ENCODE measurements at regions of chr16 and their contacts with region 1.

Region 1: DNA sequence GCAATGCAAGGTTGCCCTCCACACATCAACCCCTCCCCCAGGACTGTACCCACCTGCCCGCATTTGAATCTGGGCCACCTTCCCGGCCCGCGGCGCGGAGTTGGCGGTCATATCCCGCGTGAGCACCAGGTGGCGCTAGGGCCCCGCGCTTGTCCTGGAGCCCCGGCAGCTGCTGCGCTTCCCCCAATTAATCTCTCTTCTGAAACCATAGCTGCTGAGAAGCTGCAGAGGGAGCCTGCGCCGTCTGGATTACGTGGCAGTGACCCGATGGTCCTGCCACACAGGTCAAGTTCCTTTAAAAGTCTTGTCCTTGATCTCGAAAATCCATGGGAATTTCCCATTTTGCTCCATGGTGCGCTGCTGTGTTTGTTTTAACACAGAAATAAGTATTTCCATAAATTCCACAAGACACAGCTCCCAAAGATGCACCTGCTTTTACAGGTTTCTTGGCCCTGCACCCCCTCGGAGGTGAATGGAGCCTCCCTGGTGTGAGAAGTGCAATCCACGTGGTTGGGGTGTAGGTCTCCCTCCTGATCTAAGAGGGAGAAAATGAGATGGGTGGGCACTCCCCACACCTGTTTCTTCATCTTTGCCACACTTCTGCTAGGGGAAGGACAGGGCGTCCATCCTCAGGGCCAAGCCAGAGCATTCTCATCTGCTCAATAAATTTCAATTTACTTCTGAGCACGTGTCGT is 22.1 kb downstream of the COX4I1 start:
- DNase-seq: peak; percentile 89
- ATAC-seq: peak; percentile 80
- H3K4me3 Mint-ChIP-seq: no peak overlapping the region
- H3K27ac Mint-ChIP-seq: no peak overlapping the region
- H3K4me1 Mint-ChIP-seq: peaks cover 4% of the 10 kb centered on the region; the same call in 1 of the 2 replicates
- H3K27me3 Mint-ChIP-seq: peaks cover 29% of the 10 kb centered on the region
- CTCF ChIP-seq: peak; percentile 98

Region 2: DNA sequence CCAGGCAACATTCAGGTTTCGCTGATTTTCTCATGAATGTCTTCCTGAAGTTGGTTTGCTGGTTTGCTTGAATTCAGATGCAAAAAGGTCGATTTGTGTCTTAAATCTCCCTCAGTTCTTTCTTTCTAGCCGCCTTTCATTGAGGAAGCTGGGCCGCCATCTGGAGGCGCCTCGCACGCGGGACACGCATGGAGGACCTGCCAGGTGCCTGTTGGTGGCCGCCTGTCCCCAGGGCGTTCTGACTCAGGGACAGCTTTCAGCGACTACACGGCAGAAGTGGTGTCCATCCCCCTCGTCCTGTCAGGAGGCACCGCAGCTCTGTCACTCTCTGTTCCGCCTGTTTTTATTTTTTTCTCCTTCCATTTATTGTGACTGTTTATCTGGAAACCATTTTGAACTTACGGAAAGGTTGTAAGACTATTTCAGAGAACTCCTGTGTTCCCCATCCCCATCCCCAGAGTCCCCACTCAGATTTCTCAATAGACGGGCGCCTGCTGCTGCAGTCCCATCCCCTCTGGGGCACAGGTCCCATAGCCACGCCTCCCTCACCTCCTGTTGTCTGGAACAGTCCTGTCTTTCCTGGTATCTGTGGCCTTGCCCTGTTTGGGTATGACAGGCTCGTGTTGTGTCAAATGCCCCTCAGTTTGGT is 11.1 kb after region 1 on chr16:
- CTCF ChIA-PET with region 1: interaction called, 67 read pairs
- POLR2A ChIA-PET with region 1: no interaction called
- DNase-seq: no peak
- ATAC-seq: no peak
- H3K4me3 Mint-ChIP-seq: no peak overlapping the region
- H3K27ac Mint-ChIP-seq: no peak overlapping the region
- H3K4me1 Mint-ChIP-seq: no peaks in the 10 kb centered on the region
- H3K27me3 Mint-ChIP-seq: peaks cover 17% of the 10 kb centered on the region
- CTCF ChIP-seq: no peak

Region 3: DNA sequence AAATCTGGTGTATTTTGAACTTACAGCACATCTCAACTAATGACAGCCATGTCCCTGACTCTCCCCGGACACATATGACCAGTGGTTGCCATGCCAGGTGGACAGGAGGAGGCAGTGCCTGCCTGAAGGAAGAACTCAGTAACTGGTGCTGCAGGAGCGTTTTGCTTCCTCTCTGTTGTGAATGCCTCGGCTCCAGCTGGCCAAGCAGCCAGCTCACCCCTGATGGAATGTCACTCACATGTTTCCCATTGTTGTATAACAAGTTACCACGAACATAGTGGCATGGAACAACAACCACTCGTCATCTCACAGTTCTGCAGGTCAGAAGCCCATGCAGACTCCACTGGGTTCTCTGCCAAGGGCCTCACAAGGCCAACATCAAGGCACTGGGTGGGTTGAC is 57.3 kb after region 1 on chr16:
- CTCF ChIA-PET with region 1: interaction called, 13 read pairs
- POLR2A ChIA-PET with region 1: no interaction called
- DNase-seq: no peak
- ATAC-seq: no peak
- H3K4me3 Mint-ChIP-seq: no peak overlapping the region
- H3K27ac Mint-ChIP-seq: no peak overlapping the region
- H3K4me1 Mint-ChIP-seq: no peaks in the 10 kb centered on the region
- H3K27me3 Mint-ChIP-seq: peaks cover 21% of the 10 kb centered on the region
- CTCF ChIP-seq: no peak

Region 4: DNA sequence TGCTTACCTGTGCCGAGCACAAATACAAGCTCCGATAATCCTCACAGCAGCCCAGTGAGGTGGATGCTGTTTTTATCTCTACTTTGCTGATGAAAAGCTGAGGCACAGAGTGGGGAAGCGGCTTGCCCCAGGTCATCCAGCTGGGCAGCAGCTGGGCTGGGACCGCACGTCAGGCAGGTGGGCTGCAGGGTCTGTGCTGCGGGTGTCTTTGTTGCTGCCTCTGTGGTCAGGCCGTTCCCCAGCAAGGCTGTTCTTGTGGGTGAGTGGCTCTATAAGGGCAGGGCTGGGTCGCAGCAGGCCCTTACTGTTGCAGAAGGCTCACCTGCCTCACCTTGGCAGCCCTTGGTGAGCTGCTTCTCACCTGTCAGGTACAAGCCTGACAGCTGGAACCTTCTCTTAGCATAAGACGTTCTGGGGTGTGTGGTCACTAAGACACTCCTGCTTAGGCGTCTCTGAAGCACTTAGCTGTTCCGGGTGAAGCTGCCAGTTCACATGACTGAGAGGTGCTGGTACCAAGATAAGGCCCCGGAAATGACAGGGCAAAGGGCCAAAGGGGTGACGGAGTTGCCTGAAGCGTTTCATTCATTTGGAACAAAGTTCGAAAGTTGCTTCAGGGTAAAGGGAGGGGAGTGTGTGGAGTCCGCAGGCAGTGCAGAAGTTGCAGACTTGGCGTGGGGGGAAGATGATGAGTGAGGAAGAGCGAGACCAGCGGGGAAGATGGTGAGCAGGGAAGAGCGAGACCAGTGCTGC is 94.7 kb after region 1 on chr16:
- CTCF ChIA-PET with region 1: interaction called, 21 read pairs
- POLR2A ChIA-PET with region 1: no interaction called
- DNase-seq: no peak
- ATAC-seq: no peak
- H3K4me3 Mint-ChIP-seq: no peak overlapping the region
- H3K27ac Mint-ChIP-seq: no peak overlapping the region
- H3K4me1 Mint-ChIP-seq: peaks cover 29% of the 10 kb centered on the region
- H3K27me3 Mint-ChIP-seq: peaks cover 6% of the 10 kb centered on the region
- CTCF ChIP-seq: no peak

Region 5: GRCh38 chr16:85975451-85975981 is 153.9 kb after region 1 on chr16:
- CTCF ChIA-PET with region 1: interaction called, 291 read pairs
- POLR2A ChIA-PET with region 1: no interaction called
- DNase-seq: no peak
- ATAC-seq: no peak
- H3K4me3 Mint-ChIP-seq: no peak overlapping the region
- H3K27ac Mint-ChIP-seq: no peak overlapping the region
- H3K4me1 Mint-ChIP-seq: peaks cover 9% of the 10 kb centered on the region
- H3K27me3 Mint-ChIP-seq: no peaks in the 10 kb centered on the region
- CTCF ChIP-seq: no peak

Region 6: DNA sequence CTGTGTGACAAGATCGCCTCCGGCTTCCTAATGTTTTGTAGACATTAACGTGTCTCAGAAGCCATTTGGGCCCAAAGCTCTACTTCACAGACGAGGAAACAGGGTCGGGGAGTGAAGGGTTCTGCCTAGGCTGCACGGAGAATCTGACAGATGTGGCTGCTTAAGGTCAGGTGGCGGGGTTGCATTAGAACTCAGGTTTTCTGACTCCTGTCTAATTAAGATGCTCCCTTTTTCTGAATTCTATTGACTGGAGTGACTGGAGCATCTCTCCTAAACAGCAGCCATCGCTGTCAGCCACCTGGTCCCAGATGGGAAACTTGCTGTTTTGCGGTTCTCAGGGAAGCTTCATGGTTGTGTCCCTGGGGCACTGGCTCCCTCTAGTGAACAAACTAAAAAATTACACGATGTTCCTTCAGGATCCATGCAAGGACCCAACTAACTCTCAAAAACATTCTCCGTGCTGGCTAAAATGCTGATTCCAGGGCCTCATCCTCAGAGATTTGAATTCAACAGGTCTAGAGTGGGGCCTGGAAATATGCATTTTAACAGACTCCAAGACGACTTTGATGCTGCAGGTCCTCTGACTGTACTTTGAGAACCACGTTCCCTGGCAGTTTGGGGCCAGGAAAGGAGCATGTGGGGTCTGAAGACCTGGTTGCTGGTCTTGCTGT is 194.7 kb after region 1 on chr16:
- CTCF ChIA-PET with region 1: interaction called, 44 read pairs
- POLR2A ChIA-PET with region 1: interaction called, 3 read pairs
- DNase-seq: peak; percentile 52
- ATAC-seq: peak; percentile 78
- H3K4me3 Mint-ChIP-seq: no peak overlapping the region
- H3K27ac Mint-ChIP-seq: no peak overlapping the region
- H3K4me1 Mint-ChIP-seq: no peaks in the 10 kb centered on the region
- H3K27me3 Mint-ChIP-seq: peaks cover 9% of the 10 kb centered on the region
- CTCF ChIP-seq: peak; percentile 72

Region 7: GRCh38 chr16:86092586-86093480 is 271.2 kb after region 1 on chr16:
- CTCF ChIA-PET with region 1: no interaction called
- POLR2A ChIA-PET with region 1: no interaction called
- DNase-seq: no peak
- ATAC-seq: no peak
- H3K4me3 Mint-ChIP-seq: no peak overlapping the region
- H3K27ac Mint-ChIP-seq: no peak overlapping the region
- H3K4me1 Mint-ChIP-seq: peaks cover 24% of the 10 kb centered on the region
- H3K27me3 Mint-ChIP-seq: no peaks in the 10 kb centered on the region
- CTCF ChIP-seq: no peak